ENCODE measurements at regions of chr19 and their contacts with region 1.

Region 1: GRCh38 chr19:8444645-8445487 is at the start of gene HNRNPM:
- DNase-seq: peak; percentile 100
- ATAC-seq: peak; percentile 97
- H3K4me3 ChIP-seq: peak within 1 kb of the TSS; percentile 89
- H3K4me3 Mint-ChIP-seq: peak within 1 kb of the TSS; percentile 87 to 100 (median 98)
- H3K27ac ChIP-seq: peak within 1 kb of the TSS; percentile 98
- H3K27ac Mint-ChIP-seq: peak within 1 kb of the TSS; percentile 95 to 99 (median 98)
- H3K4me1 ChIP-seq: peaks cover 33 to 38% of the 10 kb centered on the region in 2 donors
- H3K4me1 Mint-ChIP-seq: peaks cover 31 to 50% (median 42%) of the 10 kb centered on the region in 7 donors
- H3K27me3 ChIP-seq: no peaks in the 10 kb centered on the region
- H3K27me3 Mint-ChIP-seq: no peaks in the 10 kb centered on the region
- total RNA-seq, gene HNRNPM: 175 to 280 (median 272) TPM

Region 2: DNA sequence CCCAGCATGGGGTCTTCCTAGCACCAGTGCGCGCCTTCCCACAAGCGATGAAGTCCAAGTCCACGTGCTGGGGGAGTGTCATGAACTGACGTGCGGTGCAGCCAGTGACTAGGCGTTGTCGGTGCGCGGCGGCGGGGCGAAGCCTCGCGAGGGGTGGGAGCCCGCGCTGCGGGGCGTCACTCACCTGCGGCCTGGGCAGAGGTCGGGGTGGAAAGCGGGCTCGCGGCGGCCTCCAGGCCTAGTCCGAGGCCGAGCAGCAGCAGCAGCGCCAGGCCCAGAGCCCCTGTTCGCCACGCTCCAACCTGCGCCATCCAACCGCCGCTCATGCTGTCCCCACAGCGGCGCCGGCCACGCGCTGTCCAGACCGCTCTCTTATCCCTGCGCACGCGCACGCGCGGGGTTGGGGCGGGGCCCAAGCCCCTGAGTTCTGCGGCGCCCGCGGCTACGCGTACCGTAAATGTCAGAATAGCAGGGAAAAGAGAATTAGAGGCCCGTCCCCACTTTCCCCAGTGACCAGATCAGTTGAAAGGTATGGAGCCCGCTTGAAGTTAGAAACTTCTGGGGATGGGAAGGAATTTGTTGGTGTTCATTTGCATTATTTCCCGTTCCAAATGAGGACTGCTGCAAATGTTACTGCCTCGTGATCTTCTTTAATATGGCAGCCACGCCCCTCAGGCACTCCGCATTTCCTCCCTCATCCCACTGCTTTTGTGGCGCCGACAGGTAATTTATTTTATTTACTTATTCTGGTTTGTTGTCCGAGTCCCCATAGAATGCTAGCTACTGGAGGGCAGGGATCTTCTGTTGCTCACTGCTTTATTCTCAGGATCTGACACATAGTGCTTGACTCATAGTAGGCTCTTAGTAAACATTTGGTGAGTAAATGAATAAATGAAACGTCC is 136.7 kb before region 1 on chr19 and contains the start of gene CD320:
- CTCF ChIA-PET with region 1: no interaction called
- POLR2A ChIA-PET with region 1: no interaction called
- intact Hi-C with region 1: loop called in 1 of 2 experiments (anchors 5 kb)
- DNase-seq: peak; percentile 84 to 90 (median 89)
- ATAC-seq: peak; percentile 95
- H3K4me3 ChIP-seq: peak within 1 kb of the TSS; percentile 83
- H3K4me3 Mint-ChIP-seq: peak within 1 kb of the TSS; percentile 90 to 97 (median 92)
- H3K27ac ChIP-seq: peak within 1 kb of the TSS; percentile 89
- H3K27ac Mint-ChIP-seq: peak within 1 kb of the TSS; percentile 79 to 98 (median 94)
- H3K4me1 ChIP-seq: peaks cover 20 to 22% of the 10 kb centered on the region in 2 donors
- H3K4me1 Mint-ChIP-seq: peaks cover 18 to 38% (median 35%) of the 10 kb centered on the region in 7 donors
- H3K27me3 ChIP-seq: no peaks in the 10 kb centered on the region
- H3K27me3 Mint-ChIP-seq: no peaks in the 10 kb centered on the region
- total RNA-seq, gene CD320: 20.5 to 52.0 (median 27.2) TPM

Region 3: DNA sequence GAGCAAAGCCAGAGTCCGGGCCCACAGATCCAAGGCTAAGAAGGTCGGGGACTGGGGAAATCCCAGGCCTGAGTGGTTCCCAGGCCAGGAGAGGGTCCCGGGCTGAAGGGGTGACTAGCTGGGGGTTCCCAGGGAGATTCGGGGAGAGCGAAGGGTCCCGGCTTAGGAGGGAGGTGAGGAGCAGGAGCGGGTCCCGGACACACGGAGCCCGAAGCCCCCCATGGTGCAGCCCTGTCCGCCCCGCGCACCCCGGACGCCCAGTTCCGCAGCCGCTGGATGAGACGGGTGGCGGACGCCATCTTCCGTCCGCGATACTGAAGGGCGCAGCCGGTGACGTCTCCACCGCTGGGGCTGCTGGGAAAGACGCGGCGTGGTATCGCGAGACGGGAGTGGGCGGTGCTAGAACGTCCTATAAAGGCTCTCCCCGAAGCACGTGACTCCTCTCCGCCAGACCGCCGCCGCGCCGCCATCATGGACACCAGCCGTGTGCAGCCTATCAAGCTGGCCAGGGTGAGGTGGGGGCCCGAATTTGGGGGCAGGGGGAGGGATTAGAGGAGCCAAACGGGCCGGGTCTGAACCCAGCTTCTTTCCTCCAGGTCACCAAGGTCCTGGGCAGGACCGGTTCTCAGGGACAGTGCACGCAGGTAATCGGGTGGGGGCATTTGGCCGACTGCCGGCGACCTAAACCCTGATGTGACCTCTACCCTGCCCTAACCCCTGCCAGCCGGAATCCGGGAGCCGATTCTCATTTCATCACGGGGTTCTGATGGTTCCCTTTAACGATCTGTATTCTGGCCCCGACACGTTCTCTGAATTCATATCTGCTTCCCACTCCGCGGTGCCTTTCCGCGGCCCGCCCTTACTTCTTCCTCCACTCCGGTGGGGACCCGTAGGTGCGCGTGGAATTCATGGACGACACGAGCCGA is 123.5 kb before region 1 on chr19 and contains the starts of genes NDUFA7 and RPS28:
- CTCF ChIA-PET with region 1: no interaction called
- POLR2A ChIA-PET with region 1: no interaction called
- intact Hi-C with region 1: loop called (anchors 2 kb)
- DNase-seq: peak; percentile 94 to 97 (median 96)
- ATAC-seq: peak; percentile 98
- H3K4me3 ChIP-seq: peak within 1 kb of the TSS; percentile 98
- H3K4me3 Mint-ChIP-seq: peak within 1 kb of the TSS; percentile 90 to 99 (median 98)
- H3K27ac ChIP-seq: peak within 1 kb of the TSS; percentile 96
- H3K27ac Mint-ChIP-seq: peak within 1 kb of the TSS; percentile 94 to 99 (median 98)
- H3K4me1 ChIP-seq: peaks cover 25% of the 10 kb centered on the region in 2 donors
- H3K4me1 Mint-ChIP-seq: peaks cover 16 to 44% (median 29%) of the 10 kb centered on the region in 7 donors
- H3K27me3 ChIP-seq: no peaks in the 10 kb centered on the region
- H3K27me3 Mint-ChIP-seq: no peaks in the 10 kb centered on the region
- total RNA-seq, gene NDUFA7: 16.8 to 50.3 (median 30.0) TPM
- total RNA-seq, gene RPS28: 2,319 to 4,111 (median 3,327) TPM

Region 4: GRCh38 chr19:8412783-8413628 is 31.9 kb before region 1 on chr19 and contains the start of gene MARCHF2:
- CTCF ChIA-PET with region 1: interaction called, 7 read pairs
- POLR2A ChIA-PET with region 1: interaction called, 32 read pairs
- intact Hi-C with region 1: loop called (anchors 1 kb)
- DNase-seq: peak; percentile 91 to 96 (median 93)
- ATAC-seq: peak; percentile 100
- H3K4me3 ChIP-seq: peak within 1 kb of the TSS; percentile 72
- H3K4me3 Mint-ChIP-seq: peak within 1 kb of the TSS; percentile 58 to 85 (median 71)
- H3K27ac ChIP-seq: peak within 1 kb of the TSS; percentile 76
- H3K27ac Mint-ChIP-seq: peak within 1 kb of the TSS in 6 of 9 donors; percentile 11 to 84 (median 34)
- H3K4me1 ChIP-seq: peaks cover 0 to 6% of the 10 kb centered on the region in 2 donors
- H3K4me1 Mint-ChIP-seq: peaks cover 0 to 15% (median 13%) of the 10 kb centered on the region in 7 donors
- H3K27me3 ChIP-seq: no peaks in the 10 kb centered on the region
- H3K27me3 Mint-ChIP-seq: no peaks in the 10 kb centered on the region
- total RNA-seq, gene MARCHF2: 18.0 to 42.1 (median 23.4) TPM

Region 5: GRCh38 chr19:8569066-8569771 is 124.4 kb after region 1 on chr19:
- CTCF ChIA-PET with region 1: interaction called, 3 read pairs
- POLR2A ChIA-PET with region 1: interaction called, 8 read pairs
- intact Hi-C with region 1: loop called in 1 of 2 experiments (anchors 2 kb)
- DNase-seq: peak in 3 of 9 donors; percentile 19 to 71 (median 36)
- ATAC-seq: peak; percentile 76
- H3K4me3 ChIP-seq: peak overlapping the region; percentile 44
- H3K4me3 Mint-ChIP-seq: peak overlapping the region; percentile 66 to 88 (median 74)
- H3K27ac ChIP-seq: peak overlapping the region; percentile 59
- H3K27ac Mint-ChIP-seq: peak overlapping the region; percentile 88 to 98 (median 92)
- H3K4me1 ChIP-seq: peaks cover 46 to 72% of the 10 kb centered on the region in 2 donors
- H3K4me1 Mint-ChIP-seq: peaks cover 32 to 80% (median 64%) of the 10 kb centered on the region in 7 donors
- H3K27me3 ChIP-seq: no peaks in the 10 kb centered on the region
- H3K27me3 Mint-ChIP-seq: peaks cover 0 to 2% (median 0%) of the 10 kb centered on the region in 5 donors

Region 6: GRCh38 chr19:8592231-8593009 is 147.6 kb after region 1 on chr19:
- CTCF ChIA-PET with region 1: no interaction called
- POLR2A ChIA-PET with region 1: interaction called, 3 read pairs
- intact Hi-C with region 1: loop called in 1 of 2 experiments (anchors 1 kb)
- DNase-seq: peak; percentile 80 to 98 (median 96)
- ATAC-seq: peak; percentile 93
- H3K4me3 ChIP-seq: peak overlapping the region; percentile 81
- H3K4me3 Mint-ChIP-seq: peak overlapping the region; percentile 81 to 95 (median 88)
- H3K27ac ChIP-seq: peak overlapping the region; percentile 63
- H3K27ac Mint-ChIP-seq: peak overlapping the region; percentile 17 to 89 (median 76)
- H3K4me1 ChIP-seq: peaks cover 5 to 15% of the 10 kb centered on the region in 2 donors
- H3K4me1 Mint-ChIP-seq: peaks cover 6 to 37% (median 29%) of the 10 kb centered on the region in 7 donors
- H3K27me3 ChIP-seq: no peaks in the 10 kb centered on the region
- H3K27me3 Mint-ChIP-seq: peaks cover 0 to 29% (median 0%) of the 10 kb centered on the region in 5 donors

Region 7: GRCh38 chr19:8702350-8702749 is 257.5 kb after region 1 on chr19:
- CTCF ChIA-PET with region 1: no interaction called
- POLR2A ChIA-PET with region 1: no interaction called
- intact Hi-C with region 1: no loop called
- DNase-seq: peak in 2 of 9 donors; percentile 8 to 59
- ATAC-seq: peak; percentile 74
- H3K4me3 ChIP-seq: peak overlapping the region; percentile 42
- H3K4me3 Mint-ChIP-seq: peak overlapping the region; percentile 50 to 84 (median 72)
- H3K27ac ChIP-seq: peak overlapping the region; percentile 3
- H3K27ac Mint-ChIP-seq: peak overlapping the region; percentile 21 to 81 (median 51)
- H3K4me1 ChIP-seq: peaks cover 42 to 44% of the 10 kb centered on the region in 2 donors
- H3K4me1 Mint-ChIP-seq: peaks cover 38 to 62% (median 54%) of the 10 kb centered on the region in 7 donors
- H3K27me3 ChIP-seq: no peaks in the 10 kb centered on the region
- H3K27me3 Mint-ChIP-seq: peaks cover 0 to 10% (median 0%) of the 10 kb centered on the region in 5 donors